A549 (cell line): ENCODE measurements at regions of chr17 and their contacts with region 1.

Region 1: GRCh38 chr17:50361561-50362480 is 11.2 kb downstream of the MRPL27 start:
- DNase-seq: peak; percentile 80 to 93
- ATAC-seq: peak; percentile 67 to 81
- H3K4me3 ChIP-seq: no peak overlapping the region
- H3K27ac ChIP-seq: no peak overlapping the region
- H3K4me1 ChIP-seq: peaks cover 3% of the 10 kb centered on the region; the same call in 1 of the 3 replicates
- CTCF ChIP-seq: peak; percentile 71
- EP300 ChIP-seq: no peak
- POLR2A ChIP-seq: no peak
- RAD21 ChIP-seq: peak; percentile 42 to 65; a peak in 4 of 5 replicates

Region 2: GRCh38 chr17:50221266-50221863 is 140.5 kb before region 1 on chr17:
- CTCF ChIA-PET with region 1: no interaction called
- POLR2A ChIA-PET with region 1: no interaction called
- DNase-seq: no peak
- ATAC-seq: no peak
- H3K4me3 ChIP-seq: no peak overlapping the region
- H3K27ac ChIP-seq: peak overlapping the region in 1 of 2 experiments; percentile 87; a peak in 3 of 6 replicates
- H3K4me1 ChIP-seq: peaks cover 43% of the 10 kb centered on the region
- CTCF ChIP-seq: no peak
- EP300 ChIP-seq: no peak
- POLR2A ChIP-seq: no peak
- RAD21 ChIP-seq: no peak

Region 3: GRCh38 chr17:50345432-50346312 is 16.1 kb before region 1 on chr17 and contains the start of gene XYLT2:
- CTCF ChIA-PET with region 1: interaction called, 87 read pairs
- POLR2A ChIA-PET with region 1: interaction called, 6 read pairs
- DNase-seq: peak; percentile 85 to 93
- ATAC-seq: peak; percentile 76 to 78
- H3K4me3 ChIP-seq: peak within 1 kb of the TSS; percentile 95
- H3K27ac ChIP-seq: peak within 1 kb of the TSS; percentile 94 to 99
- H3K4me1 ChIP-seq: peaks cover 27% of the 10 kb centered on the region
- CTCF ChIP-seq: no peak
- EP300 ChIP-seq: no peak
- POLR2A ChIP-seq: peak; percentile 85
- RAD21 ChIP-seq: no peak
- polyA plus RNA-seq, gene XYLT2: 9.7 and 10.5 TPM in 2 replicates

Region 4: DNA sequence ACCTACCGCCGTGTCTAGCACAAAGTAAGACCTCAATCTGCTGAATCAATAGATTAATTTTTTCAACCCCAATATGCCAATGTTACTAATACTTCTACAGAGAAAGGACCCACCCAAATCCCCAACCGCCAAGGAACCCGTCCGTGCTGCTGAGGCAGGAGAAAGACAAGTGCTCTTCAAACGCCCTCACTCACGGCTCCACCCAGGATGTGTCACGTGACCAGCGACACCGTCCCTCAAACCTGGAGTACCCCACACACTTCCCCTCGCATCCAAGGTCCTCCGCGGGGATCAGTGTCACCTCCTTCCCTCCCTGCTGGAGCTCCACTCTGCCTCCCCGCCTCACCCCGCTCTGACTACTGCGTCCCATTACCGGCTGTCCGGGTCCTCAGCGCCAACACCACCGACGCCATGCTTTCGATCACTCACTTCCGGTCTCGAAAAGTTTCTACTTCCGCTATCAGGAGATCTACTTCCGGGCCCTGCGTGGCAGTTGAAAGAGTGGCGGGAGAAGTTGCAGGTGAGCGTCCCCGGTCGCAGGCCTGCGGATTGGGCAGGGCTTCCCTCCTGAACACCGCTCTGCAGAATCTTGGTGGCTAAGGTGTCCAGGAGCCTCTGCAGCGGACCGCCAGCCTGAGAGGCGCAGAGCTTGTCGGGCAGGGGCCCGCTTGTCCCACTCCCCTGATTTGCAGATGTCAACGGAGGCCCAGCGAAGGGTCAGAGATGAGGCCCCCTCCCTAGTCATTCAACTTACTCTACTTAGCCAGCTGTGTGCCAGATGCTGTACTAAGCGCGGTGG is 11.1 kb after region 1 on chr17 and contains the starts of genes EME1 and MRPL27:
- CTCF ChIA-PET with region 1: interaction called, 108 read pairs
- POLR2A ChIA-PET with region 1: interaction called, 3 read pairs
- DNase-seq: peak; percentile 92 to 98
- ATAC-seq: peak; percentile 95 to 97
- H3K4me3 ChIP-seq: peak within 1 kb of the TSS; percentile 70
- H3K27ac ChIP-seq: peak within 1 kb of the TSS; percentile 94 to 95
- H3K4me1 ChIP-seq: peaks cover 14% of the 10 kb centered on the region; the same call in 2 of the 3 replicates
- CTCF ChIP-seq: no peak
- EP300 ChIP-seq: no peak
- POLR2A ChIP-seq: peak; percentile 85
- RAD21 ChIP-seq: no peak
- polyA plus RNA-seq, gene EME1: 26.3 and 29.9 TPM in 2 replicates
- polyA plus RNA-seq, gene MRPL27: 149 and 173 TPM in 2 replicates

Region 5: GRCh38 chr17:50514946-50515702 is 153.3 kb after region 1 on chr17:
- CTCF ChIA-PET with region 1: no interaction called
- POLR2A ChIA-PET with region 1: no interaction called
- DNase-seq: no peak
- ATAC-seq: no peak
- H3K4me3 ChIP-seq: no peak overlapping the region
- H3K27ac ChIP-seq: 0 out of 6 replicates have a peak overlapping the region, but pooled peaks of 1 of the 2 experiments have one; percentile 19
- H3K4me1 ChIP-seq: peaks cover 12% of the 10 kb centered on the region; the same call in 1 of the 3 replicates
- CTCF ChIP-seq: no peak
- EP300 ChIP-seq: no peak
- POLR2A ChIP-seq: no peak
- RAD21 ChIP-seq: no peak

Region 6: GRCh38 chr17:50672831-50673601 is 311.2 kb after region 1 on chr17:
- CTCF ChIA-PET with region 1: no interaction called
- POLR2A ChIA-PET with region 1: no interaction called
- DNase-seq: no peak
- ATAC-seq: peak in 1 of 2 experiments; percentile 17; a peak in 1 of 6 replicates
- H3K4me3 ChIP-seq: no peak overlapping the region
- H3K27ac ChIP-seq: peak overlapping the region; percentile 98
- H3K4me1 ChIP-seq: peaks cover 95% of the 10 kb centered on the region
- CTCF ChIP-seq: no peak
- EP300 ChIP-seq: no peak
- POLR2A ChIP-seq: no peak; the same call in 1 of the 2 replicates
- RAD21 ChIP-seq: no peak